ENCODE measurements at regions of chr10 and their contacts with region 1.

Region 1: DNA sequence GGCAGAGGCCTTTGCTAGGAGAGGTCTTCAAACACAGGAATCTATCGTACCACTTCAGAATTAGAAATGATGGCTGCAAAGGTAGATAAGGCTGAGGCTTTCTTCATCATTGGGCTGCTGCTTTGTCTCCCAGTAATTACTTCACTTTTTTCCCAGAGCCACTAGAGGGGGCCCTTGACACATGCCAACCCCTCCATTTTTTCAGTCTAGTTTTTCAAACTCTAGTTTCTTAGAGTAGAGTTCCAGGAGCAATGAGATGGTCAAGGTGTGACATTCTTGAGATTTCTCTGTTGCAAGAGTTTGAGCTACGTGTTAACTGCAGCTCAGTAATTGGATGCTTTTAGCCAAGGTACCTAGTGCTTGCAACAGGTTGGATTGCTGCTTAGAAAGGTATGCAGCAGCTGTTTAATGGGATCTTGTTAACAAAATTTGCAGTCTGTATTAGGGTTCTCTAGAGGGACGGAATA is 33.8 kb upstream of the RBM20 start:
- DNase-seq: peak; percentile 28
- H3K4me3 Mint-ChIP-seq: no peak overlapping the region
- H3K27ac Mint-ChIP-seq: no peak overlapping the region
- H3K4me1 Mint-ChIP-seq: peaks cover 26% of the 10 kb centered on the region
- H3K27me3 Mint-ChIP-seq: no peaks in the 10 kb centered on the region

Region 2: DNA sequence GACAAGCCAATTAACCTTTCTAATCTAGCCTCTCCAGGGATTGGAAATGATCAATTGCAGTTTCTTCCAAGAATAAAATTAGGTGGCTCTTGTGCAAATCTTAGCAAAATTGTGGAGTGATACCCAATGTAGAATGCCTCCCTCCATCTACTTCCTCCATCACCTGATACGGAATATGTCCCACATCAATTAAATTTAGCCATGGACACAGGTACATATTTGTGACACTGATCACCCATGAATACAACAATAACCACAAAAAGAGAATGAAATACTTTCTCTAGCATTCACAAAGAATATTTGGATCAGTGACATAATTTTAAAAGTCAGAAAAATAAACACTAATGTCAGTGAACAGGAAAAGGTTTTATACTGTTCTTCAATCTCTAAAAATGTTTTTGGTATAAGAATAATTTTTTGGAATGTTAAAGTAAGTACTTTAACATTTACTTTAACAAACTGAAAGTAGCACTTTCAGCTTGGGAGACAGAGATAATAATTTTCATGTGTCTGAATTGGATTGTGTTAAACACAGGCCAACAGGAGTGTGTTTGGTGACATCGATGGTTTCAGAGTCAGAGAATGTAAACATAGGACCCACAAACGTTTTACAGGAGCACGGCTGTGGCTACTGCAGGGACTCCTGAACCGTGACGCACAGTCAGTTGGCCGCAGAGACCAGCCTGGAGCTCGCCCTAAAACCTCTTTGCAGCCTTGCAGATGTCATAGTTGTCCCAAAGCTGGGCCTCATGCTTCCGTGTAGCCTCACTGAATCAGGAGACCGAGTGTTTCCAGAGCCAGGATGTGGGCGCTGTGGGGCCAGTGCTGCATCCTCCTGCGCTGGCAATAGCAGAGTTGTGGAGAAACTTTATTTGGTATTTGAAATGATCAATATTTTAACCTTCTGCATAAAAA is 41.0 kb after region 1 on chr10:
- intact Hi-C with region 1: loop called (anchors 5 kb)
- DNase-seq: no peak
- H3K4me3 Mint-ChIP-seq: no peak overlapping the region
- H3K27ac Mint-ChIP-seq: no peak overlapping the region
- H3K4me1 Mint-ChIP-seq: peaks cover 21% of the 10 kb centered on the region
- H3K27me3 Mint-ChIP-seq: peaks cover 47% of the 10 kb centered on the region

Region 3: DNA sequence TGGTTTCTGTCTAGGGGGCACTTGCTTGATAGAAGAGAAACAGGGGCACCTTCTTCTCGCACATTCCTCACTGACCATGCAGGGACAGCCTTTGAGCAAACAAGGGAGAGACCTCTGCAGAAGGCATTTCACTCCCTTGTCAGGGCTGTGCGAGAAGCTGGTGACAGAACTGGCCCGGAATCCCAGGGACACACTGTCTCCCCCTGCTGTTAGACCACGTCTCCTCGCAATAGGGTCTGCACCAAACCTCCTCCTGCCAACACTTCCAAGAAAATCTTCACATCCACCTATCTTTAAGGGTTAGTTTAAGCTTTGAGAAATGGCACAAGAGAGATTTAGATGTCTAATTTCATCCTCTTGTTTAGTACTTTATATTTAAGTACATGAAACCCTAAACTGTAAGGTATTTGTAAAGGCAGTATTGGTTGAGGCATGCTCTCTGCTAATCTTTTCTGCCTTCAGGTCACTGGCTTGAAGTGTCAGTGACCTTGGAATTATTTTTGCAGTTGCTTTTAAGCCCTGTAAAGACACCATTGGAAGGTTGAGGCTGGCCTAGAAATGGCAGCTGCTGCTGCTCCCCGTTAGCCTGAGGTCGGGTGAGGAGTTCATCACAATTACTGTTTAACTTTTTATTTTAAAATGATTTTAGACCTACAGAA is 70.8 kb after region 1 on chr10:
- intact Hi-C with region 1: loop called (anchors 1 kb)
- DNase-seq: no peak
- H3K4me3 Mint-ChIP-seq: no peak overlapping the region
- H3K27ac Mint-ChIP-seq: no peak overlapping the region
- H3K4me1 Mint-ChIP-seq: peaks cover 3% of the 10 kb centered on the region
- H3K27me3 Mint-ChIP-seq: peaks cover 42% of the 10 kb centered on the region

Region 4: DNA sequence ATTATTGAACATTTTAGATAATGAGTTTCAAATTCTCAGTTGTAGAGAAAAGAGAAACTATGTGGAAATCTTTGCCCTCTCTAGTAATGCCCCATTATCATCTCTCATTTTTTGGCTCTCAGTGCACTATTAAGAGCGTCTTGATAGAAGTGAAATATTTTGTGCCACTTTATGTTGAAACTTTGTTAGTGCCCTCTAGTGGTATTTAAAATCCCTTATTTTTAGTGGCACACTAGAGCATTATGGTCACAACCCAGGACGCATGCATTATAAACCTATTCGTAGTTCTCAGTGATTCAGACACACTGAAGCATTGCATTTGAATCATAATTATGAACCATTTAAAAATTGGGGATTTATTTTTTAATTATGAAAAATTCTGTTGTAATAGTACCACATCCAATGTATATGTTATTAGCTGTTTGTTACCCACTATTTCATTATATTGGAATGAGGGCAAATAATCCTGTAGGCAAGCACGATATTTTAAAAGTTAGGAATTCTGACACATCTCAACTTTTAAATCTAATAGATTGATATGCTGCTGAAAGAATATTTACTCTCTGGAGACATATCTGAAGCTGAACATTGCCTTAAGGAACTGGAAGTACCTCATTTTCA is 283.3 kb after region 1 on chr10:
- intact Hi-C with region 1: loop called (anchors 1 kb)
- DNase-seq: no peak
- H3K4me3 Mint-ChIP-seq: no peak overlapping the region
- H3K27ac Mint-ChIP-seq: no peak overlapping the region
- H3K4me1 Mint-ChIP-seq: peaks cover 6% of the 10 kb centered on the region
- H3K27me3 Mint-ChIP-seq: no peaks in the 10 kb centered on the region

Region 5: GRCh38 chr10:111207500-111207899 is 597.2 kb after region 1 on chr10:
- intact Hi-C with region 1: loop called (anchors 2 kb)
- DNase-seq: no peak
- H3K4me3 Mint-ChIP-seq: no peak overlapping the region
- H3K27ac Mint-ChIP-seq: no peak overlapping the region
- H3K4me1 Mint-ChIP-seq: no peaks in the 10 kb centered on the region
- H3K27me3 Mint-ChIP-seq: peaks cover 2% of the 10 kb centered on the region